ENCODE measurements at regions of chr2 and their contacts with region 1.

Region 1: DNA sequence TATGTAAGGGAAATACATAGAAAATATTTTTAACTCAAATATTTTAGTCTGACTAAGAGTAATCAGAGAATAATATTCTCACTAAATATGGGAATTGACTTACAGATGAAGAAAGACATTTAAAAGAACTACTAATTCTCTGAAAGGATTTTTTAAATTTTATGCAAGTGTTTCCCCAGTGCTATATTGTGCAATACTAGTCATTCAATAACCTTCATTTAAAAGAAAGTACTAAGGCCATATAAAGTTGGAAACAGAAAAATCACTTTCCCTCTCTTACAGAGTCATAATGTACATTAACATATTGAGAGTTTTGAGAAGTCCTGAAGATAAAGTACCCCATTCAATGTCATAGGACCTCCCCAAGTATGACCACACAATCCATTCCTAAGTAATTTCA is 584.6 kb upstream of the ACVR2A start:
- DNase-seq: no peak
- H3K4me3 ChIP-seq: no peak overlapping the region
- H3K27ac ChIP-seq: no peak overlapping the region
- H3K4me1 ChIP-seq: no peaks in the 10 kb centered on the region
- H3K27me3 ChIP-seq: no peaks in the 10 kb centered on the region
- CTCF ChIP-seq: no peak
- EP300 ChIP-seq: no peak
- POLR2A ChIP-seq: no peak

Region 2: GRCh38 chr2:147099837-147100720 is 160.2 kb before region 1 on chr2:
- in situ Hi-C with region 1: no loop called
- intact Hi-C with region 1: no loop called
- DNase-seq: no peak
- H3K4me3 ChIP-seq: no peak overlapping the region
- H3K27ac ChIP-seq: no peak overlapping the region
- H3K4me1 ChIP-seq: no peaks in the 10 kb centered on the region
- H3K27me3 ChIP-seq: no peaks in the 10 kb centered on the region
- CTCF ChIP-seq: no peak
- EP300 ChIP-seq: no peak
- POLR2A ChIP-seq: no peak

Region 3: DNA sequence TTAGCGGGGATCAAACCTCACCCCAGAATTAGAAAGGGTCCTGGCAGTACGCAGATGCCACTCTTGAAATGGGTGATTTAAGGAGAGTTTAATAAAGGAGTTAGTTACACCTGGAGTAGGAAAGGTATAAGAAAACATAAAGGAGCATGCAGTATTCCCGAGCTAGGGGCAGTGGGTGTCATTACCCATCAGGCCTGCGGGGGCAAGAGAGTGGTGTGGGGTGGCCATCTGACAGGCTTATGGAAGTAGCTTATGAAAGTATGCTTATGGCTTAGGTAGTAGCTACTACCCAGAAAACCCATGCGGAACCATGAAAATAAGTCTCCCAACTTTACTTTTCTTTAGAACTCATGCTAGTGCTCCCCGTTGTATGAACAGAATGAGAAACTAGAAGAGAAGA is 15.7 kb after region 1 on chr2:
- in situ Hi-C with region 1: no loop called
- intact Hi-C with region 1: loop called (anchors 2 kb)
- DNase-seq: no peak
- H3K4me3 ChIP-seq: no peak overlapping the region
- H3K27ac ChIP-seq: no peak overlapping the region
- H3K4me1 ChIP-seq: no peaks in the 10 kb centered on the region
- H3K27me3 ChIP-seq: no peaks in the 10 kb centered on the region
- CTCF ChIP-seq: peak in 1 of 5 experiments; percentile 8
- EP300 ChIP-seq: no peak
- POLR2A ChIP-seq: no peak

Region 4: DNA sequence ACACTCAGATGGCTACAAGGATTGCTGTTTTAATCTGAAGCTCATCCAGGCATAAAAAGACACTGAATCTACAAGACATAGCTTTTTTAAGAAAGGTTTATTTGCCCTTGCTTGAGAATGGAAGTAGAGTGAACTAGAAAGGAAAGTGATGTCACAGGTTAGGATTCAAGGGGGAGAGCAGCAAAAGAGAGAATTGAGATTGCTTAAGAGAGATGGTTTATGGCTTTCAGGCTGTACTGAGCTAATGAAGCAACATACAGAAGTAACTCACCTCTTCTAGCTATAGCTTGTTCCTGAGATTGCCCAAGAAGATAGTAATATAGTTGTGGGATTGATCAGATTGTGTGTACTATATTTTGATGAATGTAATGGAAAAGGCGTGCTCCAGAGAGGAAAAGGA is 558.5 kb after region 1 on chr2:
- in situ Hi-C with region 1: no loop called
- intact Hi-C with region 1: loop called (anchors 10 kb)
- DNase-seq: no peak
- H3K4me3 ChIP-seq: no peak overlapping the region
- H3K27ac ChIP-seq: no peak overlapping the region
- H3K4me1 ChIP-seq: no peaks in the 10 kb centered on the region
- H3K27me3 ChIP-seq: no peaks in the 10 kb centered on the region
- CTCF ChIP-seq: no peak
- EP300 ChIP-seq: no peak
- POLR2A ChIP-seq: no peak

Measured in transverse colon (tissue), 4 donors.